ENCODE measurements at regions of chr10 and their contacts with region 1.

Region 1: GRCh38 chr10:119199231-119199992 is 8.0 kb upstream of the GRK5 start:
- DNase-seq: peak; percentile 56
- H3K4me3 ChIP-seq: no peak overlapping the region
- CTCF ChIP-seq: peak; percentile 85

Region 2: DNA sequence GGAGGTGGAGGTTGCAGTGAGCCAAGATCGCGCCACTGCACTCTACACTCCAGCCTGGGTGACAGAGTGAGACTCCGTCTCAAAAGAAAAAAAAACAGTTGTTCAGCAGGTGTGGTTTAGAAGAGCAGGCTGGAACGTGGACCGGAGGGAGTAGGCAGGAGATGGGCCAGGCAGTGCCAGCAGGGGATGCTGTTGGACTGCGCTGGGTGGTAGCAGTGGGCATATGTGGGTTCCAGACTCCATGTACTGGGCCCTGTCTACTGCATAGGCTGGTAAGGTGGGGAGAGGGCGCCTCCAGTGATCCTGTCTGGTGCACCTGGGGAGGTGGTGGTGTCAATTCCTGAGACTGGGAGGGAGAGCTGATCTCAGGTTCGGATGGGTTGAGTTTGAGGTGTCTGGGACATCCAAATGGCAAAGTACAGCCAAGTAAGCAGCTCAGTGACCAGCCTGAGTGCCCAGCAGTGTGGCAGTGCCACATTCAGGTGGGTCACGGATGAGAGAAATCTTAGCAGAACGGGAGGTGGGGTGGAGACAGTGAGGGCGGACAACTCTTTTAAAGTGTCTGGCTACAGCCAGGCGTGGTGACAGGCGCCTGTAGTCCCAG is 59.8 kb before region 1 on chr10:
- CTCF ChIA-PET with region 1: interaction called, 18 read pairs
- POLR2A ChIA-PET with region 1: interaction called, 3 read pairs
- DNase-seq: no peak
- H3K4me3 ChIP-seq: no peak overlapping the region
- CTCF ChIP-seq: peak; percentile 78

Region 3: DNA sequence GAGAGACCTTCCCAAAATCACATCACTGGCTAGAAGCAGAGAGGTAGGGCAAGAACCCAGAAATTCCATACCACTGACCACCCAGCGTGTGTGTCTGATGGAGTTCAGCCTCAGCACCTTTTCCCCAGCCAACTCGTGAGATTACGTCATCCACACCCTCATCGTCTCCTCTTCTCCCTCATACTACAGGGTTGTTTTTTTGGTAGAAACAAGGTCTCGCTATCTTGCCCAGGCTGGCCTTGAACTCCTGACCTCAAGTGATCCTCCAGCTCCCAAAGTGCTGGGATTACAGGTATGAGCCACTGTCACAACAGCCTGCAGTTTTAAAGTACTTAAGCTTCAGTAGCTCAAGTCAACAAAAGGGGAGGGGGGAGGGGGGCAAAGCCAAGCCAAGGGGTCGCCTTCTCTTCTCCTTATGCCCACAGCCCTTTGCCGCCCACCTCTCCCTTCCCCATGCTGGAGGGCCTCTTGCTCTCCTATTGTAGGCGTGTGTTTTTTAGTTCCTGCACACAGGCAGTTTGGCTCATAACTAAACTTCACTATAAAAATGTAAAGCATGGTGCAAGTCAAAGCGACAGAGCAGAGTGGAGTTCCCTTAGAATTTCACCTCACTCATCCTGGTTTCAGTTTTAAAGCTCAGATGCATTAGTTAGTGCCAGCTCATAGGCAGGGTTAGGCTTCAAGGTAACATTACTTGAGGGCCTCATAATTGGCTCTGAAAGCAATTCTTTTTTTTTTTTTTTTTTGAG is 15.6 kb before region 1 on chr10:
- CTCF ChIA-PET with region 1: interaction called, 40 read pairs
- POLR2A ChIA-PET with region 1: no interaction called
- DNase-seq: no peak
- H3K4me3 ChIP-seq: no peak overlapping the region
- CTCF ChIP-seq: no peak

Region 4: GRCh38 chr10:119259345-119259744 is 59.9 kb after region 1 on chr10:
- CTCF ChIA-PET with region 1: no interaction called
- POLR2A ChIA-PET with region 1: no interaction called
- DNase-seq: no peak
- H3K4me3 ChIP-seq: no peak overlapping the region
- CTCF ChIP-seq: no peak

Region 5: DNA sequence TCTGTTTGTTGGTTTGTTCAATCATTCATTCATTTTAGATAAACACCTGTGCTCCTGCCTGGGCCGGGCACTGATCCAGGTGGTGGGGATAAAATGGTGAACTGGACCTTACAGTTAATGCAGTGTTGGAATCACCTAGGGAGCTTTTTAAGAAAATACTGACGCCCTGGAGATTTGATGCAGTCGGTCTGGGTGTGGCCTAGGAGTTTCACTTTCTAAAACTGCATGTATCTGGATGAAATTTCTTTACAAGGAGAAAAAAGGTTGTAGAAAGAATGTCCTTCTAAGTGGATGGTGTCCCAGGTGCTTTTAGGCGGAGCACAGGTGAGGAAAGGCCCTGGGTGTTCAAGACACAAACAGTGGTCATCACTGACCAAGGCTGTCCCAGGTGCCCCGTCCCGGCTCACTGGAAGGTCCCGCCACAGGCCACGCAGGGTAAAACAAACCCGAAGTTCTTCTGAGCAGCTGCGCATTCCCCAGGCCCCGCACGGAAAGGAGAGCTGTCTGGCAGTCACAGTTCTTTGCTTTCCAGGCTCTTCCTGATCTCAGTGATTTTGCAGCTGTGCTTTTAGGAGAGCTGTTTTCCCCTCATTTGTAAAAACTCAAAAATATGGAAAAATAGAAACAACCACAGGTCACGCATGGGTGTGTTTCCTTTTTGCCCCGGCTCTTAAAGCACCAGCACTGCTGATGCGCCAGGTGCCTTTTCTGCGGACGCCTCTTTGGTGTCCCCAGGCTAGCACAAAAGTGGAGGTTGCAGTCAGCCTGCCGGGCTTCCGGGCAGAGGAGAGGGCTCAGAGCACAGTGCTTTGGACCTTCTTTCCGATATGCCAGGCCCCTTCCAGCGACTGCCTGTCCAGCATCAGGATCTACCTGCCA is 169.8 kb after region 1 on chr10:
- CTCF ChIA-PET with region 1: interaction called, 13 read pairs
- POLR2A ChIA-PET with region 1: interaction called, 3 read pairs
- DNase-seq: no peak
- H3K4me3 ChIP-seq: no peak overlapping the region
- CTCF ChIP-seq: no peak

Region 6: GRCh38 chr10:119494236-119495060 is 295.0 kb after region 1 on chr10:
- CTCF ChIA-PET with region 1: interaction called, 62 read pairs
- POLR2A ChIA-PET with region 1: no interaction called
- DNase-seq: no peak
- H3K4me3 ChIP-seq: no peak overlapping the region
- CTCF ChIP-seq: no peak

Region 7: GRCh38 chr10:119602241-119603095 is 403.1 kb after region 1 on chr10:
- CTCF ChIA-PET with region 1: interaction called, 26 read pairs
- POLR2A ChIA-PET with region 1: no interaction called
- DNase-seq: no peak
- H3K4me3 ChIP-seq: no peak overlapping the region
- CTCF ChIP-seq: peak; percentile 57

Region 8: GRCh38 chr10:120336911-120337540 is 1137.6 kb after region 1 on chr10:
- CTCF ChIA-PET with region 1: no interaction called
- POLR2A ChIA-PET with region 1: no interaction called
- DNase-seq: no peak
- H3K4me3 ChIP-seq: no peak overlapping the region
- CTCF ChIP-seq: peak; percentile 62